ENCODE measurements at regions of chr19 and their contacts with region 1.

Region 1: DNA sequence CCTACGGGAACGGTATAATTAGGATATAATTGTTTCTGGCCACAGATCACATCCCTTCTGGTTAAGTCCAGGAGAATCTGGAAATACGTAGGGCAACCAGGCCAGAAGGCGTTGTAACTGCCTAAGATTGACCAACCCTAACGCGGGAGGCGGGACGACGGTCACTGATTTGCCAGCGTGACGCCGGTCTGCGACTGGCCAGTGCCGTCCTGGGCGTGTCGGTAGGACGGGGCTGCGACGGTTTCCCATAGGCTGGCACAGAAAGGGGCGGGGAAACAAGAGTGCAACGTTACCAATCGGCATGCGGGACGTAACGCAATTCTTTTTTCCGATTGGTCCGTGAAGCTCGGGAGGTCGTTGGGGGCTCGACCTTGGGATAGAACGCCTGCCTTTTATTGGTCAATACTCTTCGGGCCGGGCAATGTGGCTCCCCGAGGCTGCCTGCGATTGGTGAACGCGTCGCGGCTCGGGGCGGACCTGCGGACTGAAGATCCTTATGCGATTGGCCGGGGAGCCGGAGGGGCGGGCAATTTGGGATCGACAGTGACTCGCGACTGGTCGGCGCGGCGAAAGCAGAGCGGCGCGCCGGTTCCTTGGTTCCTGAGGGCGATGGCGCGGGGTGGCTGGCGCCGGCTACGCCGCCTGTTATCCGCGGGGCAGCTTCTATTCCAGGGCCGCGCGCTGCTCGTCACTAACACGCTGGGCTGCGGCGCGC is at the start of gene MPV17L2:
- DNase-seq: peak; percentile 94 to 100 (median 98)
- ATAC-seq: peak; percentile 87
- H3K4me3 ChIP-seq: peak within 1 kb of the TSS; percentile 92
- H3K4me3 Mint-ChIP-seq: peak within 1 kb of the TSS; percentile 90
- H3K27ac ChIP-seq: peak within 1 kb of the TSS; percentile 73 to 82
- H3K27ac Mint-ChIP-seq: peak within 1 kb of the TSS; percentile 81
- H3K4me1 ChIP-seq: peaks cover 30% of the 10 kb centered on the region
- H3K4me1 Mint-ChIP-seq: peaks cover 29% of the 10 kb centered on the region
- H3K27me3 ChIP-seq: no peaks in the 10 kb centered on the region
- H3K27me3 Mint-ChIP-seq: no peaks in the 10 kb centered on the region
- CTCF ChIP-seq: no peak
- total RNA-seq, gene MPV17L2: 2.8 to 3.9 TPM

Region 2: GRCh38 chr19:18152444-18152816 is 40.4 kb before region 1 on chr19:
- CTCF ChIA-PET with region 1: interaction called, 6 read pairs
- POLR2A ChIA-PET with region 1: interaction called, 8 read pairs
- intact Hi-C with region 1: loop called in 1 of 2 experiments (anchors 5 kb)
- DNase-seq: peak; percentile 94 to 99 (median 98)
- ATAC-seq: peak; percentile 67
- H3K4me3 ChIP-seq: peak overlapping the region; percentile 78
- H3K4me3 Mint-ChIP-seq: peak overlapping the region; percentile 86
- H3K27ac ChIP-seq: peak overlapping the region; percentile 64 to 88
- H3K27ac Mint-ChIP-seq: peak overlapping the region; percentile 80
- H3K4me1 ChIP-seq: peaks cover 36% of the 10 kb centered on the region
- H3K4me1 Mint-ChIP-seq: peaks cover 23% of the 10 kb centered on the region
- H3K27me3 ChIP-seq: no peaks in the 10 kb centered on the region
- H3K27me3 Mint-ChIP-seq: no peaks in the 10 kb centered on the region
- CTCF ChIP-seq: peak; percentile 58

Region 3: GRCh38 chr19:18173572-18174288 is 19.1 kb before region 1 on chr19 and contains the start of gene IFI30:
- CTCF ChIA-PET with region 1: no interaction called
- POLR2A ChIA-PET with region 1: interaction called, 14 read pairs
- intact Hi-C with region 1: no loop called
- DNase-seq: peak in 10 of 14 experiments; percentile 25 to 82 (median 62)
- ATAC-seq: peak; percentile 88
- H3K4me3 ChIP-seq: peak within 1 kb of the TSS; percentile 85
- H3K4me3 Mint-ChIP-seq: peak within 1 kb of the TSS; percentile 92
- H3K27ac ChIP-seq: peak within 1 kb of the TSS; percentile 35 to 78
- H3K27ac Mint-ChIP-seq: peak within 1 kb of the TSS; percentile 64
- H3K4me1 ChIP-seq: peaks cover 29% of the 10 kb centered on the region
- H3K4me1 Mint-ChIP-seq: peaks cover 13% of the 10 kb centered on the region
- H3K27me3 ChIP-seq: no peaks in the 10 kb centered on the region
- H3K27me3 Mint-ChIP-seq: no peaks in the 10 kb centered on the region
- CTCF ChIP-seq: no peak
- total RNA-seq, gene IFI30: 10.6 to 10.7 TPM

Region 4: GRCh38 chr19:18251587-18252369 is 58.9 kb after region 1 on chr19:
- CTCF ChIA-PET with region 1: interaction called, 51 read pairs
- POLR2A ChIA-PET with region 1: interaction called, 11 read pairs
- intact Hi-C with region 1: loop called (anchors 1 kb)
- DNase-seq: peak; percentile 65 to 90 (median 81)
- ATAC-seq: peak; percentile 91
- H3K4me3 ChIP-seq: no peak overlapping the region
- H3K4me3 Mint-ChIP-seq: no peak overlapping the region
- H3K27ac ChIP-seq: no peak overlapping the region
- H3K27ac Mint-ChIP-seq: no peak overlapping the region
- H3K4me1 ChIP-seq: peaks cover 8% of the 10 kb centered on the region
- H3K4me1 Mint-ChIP-seq: no peaks in the 10 kb centered on the region
- H3K27me3 ChIP-seq: peaks cover 8 to 12% of the 10 kb centered on the region in 2 experiments
- H3K27me3 Mint-ChIP-seq: peaks cover 31% of the 10 kb centered on the region
- CTCF ChIP-seq: peak; percentile 80

Region 5: DNA sequence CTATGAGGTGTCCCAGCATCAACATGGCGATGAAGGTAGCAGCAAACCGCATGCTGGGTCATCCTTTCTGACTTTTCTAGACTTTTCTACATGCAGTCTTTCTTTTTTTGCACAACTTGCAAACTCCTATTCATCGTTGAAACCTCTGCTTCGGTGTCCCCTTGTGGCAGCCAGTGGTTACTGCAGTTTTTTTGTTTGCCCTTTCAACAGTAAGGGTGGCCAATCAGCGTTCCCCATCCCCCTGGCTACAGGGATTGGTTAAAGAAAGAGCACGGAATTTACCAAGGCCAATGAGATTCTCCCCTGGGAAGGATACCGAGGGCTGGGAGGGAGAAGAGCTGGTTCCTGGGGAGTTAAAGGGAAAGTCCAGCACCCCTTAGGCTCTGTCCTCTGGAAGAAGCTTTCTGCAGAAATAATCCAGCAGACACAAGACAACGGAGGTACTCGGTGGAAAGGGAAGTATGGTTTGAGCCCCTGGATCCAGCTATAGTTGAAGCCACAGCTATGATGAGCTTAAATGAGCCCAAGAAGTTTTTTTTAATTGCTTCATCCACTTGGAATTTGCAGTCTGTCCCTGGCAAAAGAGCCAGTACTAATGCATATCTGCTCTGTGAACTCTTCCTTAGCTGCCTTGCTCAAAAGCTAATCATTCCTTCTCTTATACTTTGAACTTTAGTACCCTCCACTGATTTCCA is 135.7 kb after region 1 on chr19:
- CTCF ChIA-PET with region 1: interaction called, 3 read pairs
- POLR2A ChIA-PET with region 1: interaction called, 17 read pairs
- intact Hi-C with region 1: loop called in 1 of 2 experiments (anchors 5 kb)
- DNase-seq: peak; percentile 76 to 94 (median 82)
- ATAC-seq: peak; percentile 99
- H3K4me3 ChIP-seq: peak overlapping the region; percentile 31
- H3K4me3 Mint-ChIP-seq: peak overlapping the region; percentile 47
- H3K27ac ChIP-seq: no peak overlapping the region
- H3K27ac Mint-ChIP-seq: peak overlapping the region; percentile 6
- H3K4me1 ChIP-seq: peaks cover 24% of the 10 kb centered on the region
- H3K4me1 Mint-ChIP-seq: peaks cover 17% of the 10 kb centered on the region
- H3K27me3 ChIP-seq: no peaks in the 10 kb centered on the region
- H3K27me3 Mint-ChIP-seq: no peaks in the 10 kb centered on the region
- CTCF ChIP-seq: peak; percentile 92